ENCODE measurements at regions of chr5 and their contacts with region 1.

Region 1: DNA sequence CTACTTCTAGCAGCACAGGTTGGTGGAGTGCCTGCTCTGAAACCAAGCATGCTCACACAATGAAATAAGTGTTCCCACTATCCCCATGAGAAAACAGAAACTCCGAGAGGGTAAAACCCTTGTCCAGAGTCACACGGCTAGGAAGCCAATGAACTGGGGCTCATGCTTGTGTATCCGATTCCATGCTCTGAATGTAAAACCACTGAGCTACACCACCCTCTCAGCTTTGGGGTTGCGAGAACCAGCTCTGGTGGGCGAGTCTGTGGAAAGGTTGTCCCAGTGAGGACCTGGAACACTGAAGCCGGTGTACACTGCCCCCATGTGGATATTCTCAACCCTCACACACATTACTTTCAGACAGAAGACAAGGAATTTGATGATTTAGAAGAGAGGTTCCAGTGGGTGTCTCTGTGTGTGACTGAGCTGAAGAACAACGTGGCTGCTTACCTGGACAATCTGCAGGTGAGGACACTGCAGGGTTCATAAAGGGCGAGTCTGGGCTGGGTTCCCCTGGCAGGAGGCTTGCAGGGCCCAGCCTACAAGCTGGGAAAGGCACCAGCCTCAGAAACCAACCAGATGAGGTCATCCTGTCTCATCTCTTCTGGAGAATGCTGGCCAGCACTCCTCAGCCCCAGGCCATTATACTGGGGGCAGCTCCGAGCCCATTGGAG is 37.4 kb downstream of the ARHGEF37 start:
- DNase-seq: peak; percentile 99
- H3K4me3 ChIP-seq: no peak overlapping the region
- H3K27ac ChIP-seq: peak overlapping the region; percentile 82
- H3K4me1 ChIP-seq: peaks cover 24% of the 10 kb centered on the region
- H3K27me3 ChIP-seq: no peaks in the 10 kb centered on the region
- CTCF ChIP-seq: peak; percentile 73 to 75

Region 2: GRCh38 chr5:149381987-149382340 is 236.8 kb before region 1 on chr5:
- CTCF ChIA-PET with region 1: no interaction called
- dilution Hi-C with region 1: no loop called
- in situ Hi-C with region 1: no loop called
- intact Hi-C with region 1: loop called (anchors 1 kb)
- DNase-seq: peak; percentile 49
- H3K4me3 ChIP-seq: no peak overlapping the region
- H3K27ac ChIP-seq: no peak overlapping the region
- H3K4me1 ChIP-seq: peaks cover 13% of the 10 kb centered on the region
- H3K27me3 ChIP-seq: no peaks in the 10 kb centered on the region
- CTCF ChIP-seq: peak; percentile 90 to 96

Region 3: GRCh38 chr5:149422366-149423048 is 196.2 kb before region 1 on chr5:
- CTCF ChIA-PET with region 1: no interaction called
- dilution Hi-C with region 1: no loop called
- in situ Hi-C with region 1: no loop called
- intact Hi-C with region 1: no loop called
- DNase-seq: no peak
- H3K4me3 ChIP-seq: no peak overlapping the region
- H3K27ac ChIP-seq: no peak overlapping the region
- H3K4me1 ChIP-seq: no peaks in the 10 kb centered on the region
- H3K27me3 ChIP-seq: no peaks in the 10 kb centered on the region
- CTCF ChIP-seq: no peak

Region 4: GRCh38 chr5:149442563-149443182 is 176.0 kb before region 1 on chr5:
- CTCF ChIA-PET with region 1: interaction called, 4 read pairs
- dilution Hi-C with region 1: no loop called
- in situ Hi-C with region 1: no loop called
- intact Hi-C with region 1: loop called (anchors 1 kb)
- DNase-seq: peak; percentile 80
- H3K4me3 ChIP-seq: no peak overlapping the region
- H3K27ac ChIP-seq: peak overlapping the region; percentile 89
- H3K4me1 ChIP-seq: peaks cover 70% of the 10 kb centered on the region
- H3K27me3 ChIP-seq: no peaks in the 10 kb centered on the region
- CTCF ChIP-seq: peak; percentile 91 to 94

Region 5: DNA sequence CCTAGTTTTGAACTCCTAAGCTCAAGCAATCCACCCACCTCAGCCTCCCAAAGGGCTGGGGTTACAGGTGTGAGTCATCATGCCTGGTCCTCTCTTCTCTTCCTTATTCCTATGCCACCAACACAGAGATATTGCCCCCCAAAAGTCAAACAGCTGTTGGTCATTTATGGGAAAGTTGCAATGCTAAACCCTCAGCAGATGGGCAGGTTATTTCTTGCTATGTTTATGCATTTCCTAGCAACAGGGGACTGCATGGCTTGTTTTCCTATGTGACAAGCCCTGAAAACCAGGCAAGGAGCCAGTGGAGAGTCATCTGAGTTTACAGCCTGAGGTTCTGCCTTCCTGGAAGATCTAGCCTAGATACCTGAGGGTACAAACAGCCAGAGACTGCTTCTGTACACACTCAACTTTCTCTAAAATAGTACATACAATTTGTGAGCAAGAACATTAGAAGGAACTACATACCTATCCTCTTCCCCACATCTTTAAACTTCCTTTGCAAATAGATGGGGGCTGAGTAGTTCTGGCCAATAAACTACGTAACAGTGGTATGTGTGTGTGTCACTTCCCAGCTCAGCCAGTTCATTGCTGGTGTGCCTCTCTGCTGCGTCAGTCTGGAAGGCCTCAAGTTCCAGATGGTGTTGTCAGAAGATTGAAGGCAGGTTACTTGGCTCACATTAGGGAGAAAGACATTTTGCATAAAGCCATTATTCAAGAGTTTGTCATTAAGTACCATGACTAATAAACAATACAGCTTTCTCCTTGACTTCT is 132.9 kb before region 1 on chr5:
- CTCF ChIA-PET with region 1: no interaction called
- dilution Hi-C with region 1: no loop called
- in situ Hi-C with region 1: no loop called
- intact Hi-C with region 1: loop called (anchors 5 kb)
- DNase-seq: peak; percentile 99
- H3K4me3 ChIP-seq: no peak overlapping the region
- H3K27ac ChIP-seq: peak overlapping the region; percentile 97
- H3K4me1 ChIP-seq: peaks cover 63% of the 10 kb centered on the region
- H3K27me3 ChIP-seq: no peaks in the 10 kb centered on the region
- CTCF ChIP-seq: no peak

Region 6: DNA sequence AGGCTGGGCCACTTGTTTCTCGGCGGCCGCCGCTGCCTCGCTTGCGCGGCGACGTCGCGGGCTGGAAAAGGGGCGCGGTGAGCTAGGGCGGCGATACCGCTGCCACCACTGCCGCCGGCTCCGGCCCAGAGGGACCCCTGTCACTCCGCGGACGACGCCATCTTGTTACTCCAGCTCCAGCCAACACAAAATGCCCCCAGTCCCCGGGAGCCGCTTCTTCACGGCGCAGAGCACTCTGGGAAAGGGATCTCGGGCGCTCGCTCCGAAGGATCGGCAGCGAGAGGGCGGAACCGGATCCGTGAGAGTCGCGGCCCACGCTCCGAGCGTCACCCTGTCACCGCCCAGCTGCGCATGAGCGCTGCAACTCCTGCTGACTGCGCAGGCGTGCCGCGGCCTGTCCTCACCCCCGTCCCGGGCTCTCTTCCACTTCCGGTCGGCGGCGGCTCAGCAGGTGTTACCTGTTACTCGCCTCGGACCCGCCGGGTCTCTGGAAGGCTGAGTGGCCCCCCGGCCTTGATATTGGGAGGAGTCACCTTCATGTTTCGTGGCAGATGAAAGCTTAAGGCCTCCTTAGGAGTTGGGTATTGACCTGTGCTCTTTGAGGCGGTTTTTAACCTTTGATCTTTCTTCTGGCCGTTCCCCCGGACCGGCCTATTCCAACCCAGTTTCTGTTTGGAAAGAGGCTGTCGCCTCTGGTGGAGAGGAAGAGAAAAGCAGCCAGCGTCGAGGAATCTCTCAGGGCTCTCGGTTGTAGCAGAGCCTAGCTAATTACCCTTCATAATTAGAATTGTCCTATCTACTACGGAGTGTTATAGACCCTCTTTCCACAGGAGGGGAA is 67.3 kb before region 1 on chr5 and contains the start of gene CSNK1A1:
- CTCF ChIA-PET with region 1: interaction called, 4 read pairs
- dilution Hi-C with region 1: loop called (anchors 5 kb)
- in situ Hi-C with region 1: no loop called
- intact Hi-C with region 1: loop called (anchors 1 kb)
- DNase-seq: peak; percentile 99
- H3K4me3 ChIP-seq: peak within 1 kb of the TSS; percentile 71 to 94 (median 77)
- H3K27ac ChIP-seq: peak within 1 kb of the TSS; percentile 91
- H3K4me1 ChIP-seq: peaks cover 20% of the 10 kb centered on the region
- H3K27me3 ChIP-seq: no peaks in the 10 kb centered on the region
- CTCF ChIP-seq: peak; percentile 65 to 82
- total RNA-seq, gene CSNK1A1: 444 to 457 TPM

Region 7: DNA sequence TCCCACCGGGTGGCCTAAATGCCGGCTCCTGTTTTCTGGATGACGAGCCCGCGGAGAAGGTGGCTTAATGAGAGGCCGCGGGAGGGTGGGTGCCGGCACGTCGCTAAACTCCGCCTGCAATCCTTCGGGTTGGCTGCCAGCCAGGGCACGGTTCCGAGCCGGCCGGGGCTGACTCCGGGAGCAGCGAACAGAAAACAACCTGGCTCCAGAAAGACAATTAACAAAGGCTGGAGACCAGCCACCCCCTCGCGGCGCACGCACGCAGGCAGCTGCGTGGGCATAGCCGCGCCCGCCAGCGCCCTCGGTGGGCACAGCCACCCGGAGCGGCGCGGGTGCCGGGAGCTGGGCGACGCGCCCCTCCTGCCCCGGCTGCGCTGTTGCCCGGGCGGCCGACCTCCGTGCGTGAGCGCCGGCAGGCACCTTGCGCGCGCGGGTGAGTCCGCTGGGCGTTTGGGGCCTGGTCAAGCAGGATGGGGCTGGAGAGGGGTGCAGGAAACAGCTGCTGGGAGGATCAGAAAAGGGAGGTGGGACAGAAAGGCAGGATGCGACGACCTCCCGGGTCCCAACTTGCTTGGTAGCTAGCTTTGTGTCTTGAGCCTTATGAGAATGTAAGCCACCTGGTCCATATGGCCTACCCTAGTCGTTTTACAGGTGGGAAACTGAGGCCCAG is 37.4 kb before region 1 on chr5 and contains the start of gene ARHGEF37:
- CTCF ChIA-PET with region 1: interaction called, 3 read pairs
- dilution Hi-C with region 1: no loop called
- in situ Hi-C with region 1: no loop called
- intact Hi-C with region 1: loop called (anchors 1 kb)
- DNase-seq: peak; percentile 77
- H3K4me3 ChIP-seq: peak within 1 kb of the TSS; percentile 37 to 61 (median 52)
- H3K27ac ChIP-seq: peak within 1 kb of the TSS; percentile 81
- H3K4me1 ChIP-seq: peaks cover 15% of the 10 kb centered on the region
- H3K27me3 ChIP-seq: no peaks in the 10 kb centered on the region
- CTCF ChIP-seq: no peak
- total RNA-seq, gene ARHGEF37: 11.0 to 35.2 TPM

Region 8: DNA sequence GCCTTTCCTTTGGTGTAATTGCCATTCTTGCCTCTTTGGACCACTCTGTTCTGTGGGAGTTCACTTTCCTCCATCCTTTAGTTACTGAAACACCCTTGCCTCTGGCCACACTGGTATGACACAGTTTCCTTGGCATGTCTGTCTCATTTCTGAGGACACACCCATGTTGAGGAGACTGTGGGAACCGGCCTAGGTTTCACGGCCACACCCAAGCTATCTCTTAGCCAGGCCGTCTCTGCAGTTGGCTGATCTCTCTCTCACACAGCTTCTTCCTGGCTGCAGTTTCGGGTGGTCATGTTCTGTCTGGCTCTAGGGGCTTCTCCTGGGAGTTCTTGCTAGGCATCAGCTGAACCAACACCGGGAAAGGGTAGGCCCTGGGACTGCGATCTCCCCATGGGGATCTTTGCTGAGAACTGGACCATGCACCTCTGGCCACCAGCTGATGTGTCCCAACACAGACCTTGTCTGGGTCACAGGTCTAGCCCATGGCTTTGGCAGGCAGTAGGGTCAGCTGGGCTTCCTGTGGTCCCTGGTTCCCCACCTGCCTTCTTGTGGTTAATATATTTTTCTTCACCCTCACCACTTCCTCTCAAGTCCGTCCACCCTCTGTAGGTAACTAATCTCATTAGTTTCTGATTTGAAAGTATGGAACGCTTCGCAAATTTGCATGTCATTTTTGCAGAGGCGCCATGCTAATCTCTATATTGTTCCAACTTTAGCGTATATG is 12.6 kb before region 1 on chr5:
- CTCF ChIA-PET with region 1: interaction called, 9 read pairs
- dilution Hi-C with region 1: no loop called
- in situ Hi-C with region 1: no loop called
- intact Hi-C with region 1: loop called (anchors 1 kb)
- DNase-seq: peak; percentile 99
- H3K4me3 ChIP-seq: no peak overlapping the region
- H3K27ac ChIP-seq: peak overlapping the region; percentile 99
- H3K4me1 ChIP-seq: peaks cover 27% of the 10 kb centered on the region
- H3K27me3 ChIP-seq: no peaks in the 10 kb centered on the region
- CTCF ChIP-seq: no peak